A549 (cell line): ENCODE measurements at regions of chr22 and their contacts with region 1.

Region 1: GRCh38 chr22:37953437-37954179 is at the starts of genes C22orf23 and POLR2F:
- DNase-seq: peak; percentile 90 to 91
- ATAC-seq: peak; percentile 94 to 95
- H3K4me3 ChIP-seq: peak within 1 kb of the TSS; percentile 79
- H3K27ac ChIP-seq: peak within 1 kb of the TSS; percentile 87 to 99
- H3K4me1 ChIP-seq: peaks cover 7% of the 10 kb centered on the region; the same call in 2 of the 3 replicates
- CTCF ChIP-seq: no peak
- EP300 ChIP-seq: no peak
- POLR2A ChIP-seq: peak; percentile 89
- RAD21 ChIP-seq: no peak
- polyA plus RNA-seq, gene C22orf23: 0.49 and 0.52 TPM in 2 replicates
- polyA plus RNA-seq, gene POLR2F: 59.1 and 90.0 TPM in 2 replicates

Region 2: DNA sequence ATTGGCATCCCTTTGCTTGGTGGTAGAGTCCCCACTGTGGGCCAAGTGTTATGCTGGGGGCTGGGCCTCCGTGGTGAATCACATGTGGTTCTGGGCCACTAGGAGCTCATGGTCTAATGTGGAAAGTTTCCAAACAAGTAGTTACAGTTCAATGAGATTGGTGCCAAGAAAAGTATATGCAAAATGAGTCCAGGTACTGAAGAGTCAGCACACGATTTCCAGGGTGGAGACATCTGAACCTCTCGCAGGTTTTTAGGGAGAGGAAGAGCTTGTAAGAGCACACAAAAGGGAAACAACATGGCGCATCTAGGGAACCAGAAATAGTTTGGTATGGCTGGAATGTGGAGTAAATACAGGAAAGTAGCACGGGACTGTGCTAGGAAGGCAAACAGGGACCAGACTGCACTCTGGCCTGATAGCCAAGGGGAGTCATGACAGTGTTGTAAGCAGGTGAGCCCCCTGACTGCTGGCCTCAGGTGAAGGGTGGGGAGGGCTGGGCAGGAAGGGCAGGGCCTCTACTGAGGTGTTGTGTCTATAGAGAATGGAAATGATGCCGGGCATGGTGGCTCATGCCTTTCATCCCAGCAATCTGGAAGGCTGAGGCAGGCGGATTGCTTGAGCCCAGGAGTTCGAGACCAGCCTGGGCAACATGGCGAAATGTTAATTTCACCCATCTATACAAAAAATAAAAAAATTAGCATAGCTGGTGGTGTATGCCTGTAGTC is 12.5 kb after region 1 on chr22:
- CTCF ChIA-PET with region 1: interaction called, 13 read pairs
- POLR2A ChIA-PET with region 1: no interaction called
- DNase-seq: no peak
- ATAC-seq: no peak
- H3K4me3 ChIP-seq: no peak overlapping the region
- H3K27ac ChIP-seq: no peak overlapping the region
- H3K4me1 ChIP-seq: no peaks in the 10 kb centered on the region
- CTCF ChIP-seq: no peak
- EP300 ChIP-seq: no peak
- POLR2A ChIP-seq: no peak
- RAD21 ChIP-seq: no peak

Region 3: GRCh38 chr22:37982938-37983859 is 29.6 kb after region 1 on chr22:
- CTCF ChIA-PET with region 1: no interaction called
- POLR2A ChIA-PET with region 1: no interaction called
- DNase-seq: no peak
- ATAC-seq: no peak
- H3K4me3 ChIP-seq: no peak overlapping the region
- H3K27ac ChIP-seq: no peak overlapping the region
- H3K4me1 ChIP-seq: no peaks in the 10 kb centered on the region
- CTCF ChIP-seq: no peak
- EP300 ChIP-seq: no peak
- POLR2A ChIP-seq: no peak
- RAD21 ChIP-seq: no peak

Region 4: GRCh38 chr22:38009000-38009806 is 55.6 kb after region 1 on chr22:
- CTCF ChIA-PET with region 1: no interaction called
- POLR2A ChIA-PET with region 1: no interaction called
- DNase-seq: no peak
- ATAC-seq: no peak; a peak in 1 of 6 replicates
- H3K4me3 ChIP-seq: no peak overlapping the region
- H3K27ac ChIP-seq: no peak overlapping the region
- H3K4me1 ChIP-seq: no peaks in the 10 kb centered on the region
- CTCF ChIP-seq: no peak
- EP300 ChIP-seq: no peak
- POLR2A ChIP-seq: no peak
- RAD21 ChIP-seq: no peak

Region 5: GRCh38 chr22:38143036-38143697 is 189.6 kb after region 1 on chr22:
- CTCF ChIA-PET with region 1: no interaction called
- POLR2A ChIA-PET with region 1: no interaction called
- DNase-seq: no peak
- ATAC-seq: no peak
- H3K4me3 ChIP-seq: no peak overlapping the region
- H3K27ac ChIP-seq: no peak overlapping the region
- H3K4me1 ChIP-seq: peaks cover 12% of the 10 kb centered on the region
- CTCF ChIP-seq: no peak
- EP300 ChIP-seq: no peak
- POLR2A ChIP-seq: no peak
- RAD21 ChIP-seq: no peak